Activated CD8-positive, alpha-beta T cell treated with anti-CD3 and anti-CD28 coated beads for 36 hours (primary cell): ENCODE measurements at regions of chr2 and their contacts with region 1.

Region 1: DNA sequence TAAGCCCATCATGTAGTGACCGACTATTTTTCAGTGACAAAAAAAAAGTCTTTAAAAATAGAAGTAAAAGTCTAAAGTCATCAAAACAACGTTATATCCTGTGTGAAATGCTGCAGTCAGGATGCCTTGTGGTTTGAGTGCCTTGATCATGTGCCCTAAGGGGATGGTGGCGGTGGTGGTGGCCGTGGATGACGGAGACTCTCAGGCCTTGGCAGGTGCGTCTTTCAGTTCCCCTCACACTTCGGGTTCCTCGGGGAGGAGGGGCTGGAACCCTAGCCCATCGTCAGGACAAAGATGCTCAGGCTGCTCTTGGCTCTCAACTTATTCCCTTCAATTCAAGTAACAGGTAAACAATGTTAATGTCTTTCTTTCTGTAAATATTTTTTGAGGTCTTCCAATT is at the start of gene CD28:
- DNase-seq: peak; percentile 97
- ATAC-seq: peak; percentile 75
- H3K4me3 Mint-ChIP-seq: peak within 1 kb of the TSS; percentile 92
- H3K27ac Mint-ChIP-seq: peak within 1 kb of the TSS; percentile 97
- H3K4me1 Mint-ChIP-seq: peaks cover 42% of the 10 kb centered on the region
- H3K27me3 Mint-ChIP-seq: no peaks in the 10 kb centered on the region
- CTCF ChIP-seq: no peak
- total RNA-seq, gene CD28: 94.2 to 97.3 TPM

Region 2: GRCh38 chr2:203400816-203401585 is 305.4 kb before region 1 on chr2:
- CTCF ChIA-PET with region 1: no interaction called
- POLR2A ChIA-PET with region 1: no interaction called
- intact Hi-C with region 1: no loop called
- DNase-seq: no peak
- ATAC-seq: no peak
- H3K4me3 Mint-ChIP-seq: no peak overlapping the region
- H3K27ac Mint-ChIP-seq: no peak overlapping the region
- H3K4me1 Mint-ChIP-seq: no peaks in the 10 kb centered on the region
- H3K27me3 Mint-ChIP-seq: no peaks in the 10 kb centered on the region
- CTCF ChIP-seq: no peak

Region 3: DNA sequence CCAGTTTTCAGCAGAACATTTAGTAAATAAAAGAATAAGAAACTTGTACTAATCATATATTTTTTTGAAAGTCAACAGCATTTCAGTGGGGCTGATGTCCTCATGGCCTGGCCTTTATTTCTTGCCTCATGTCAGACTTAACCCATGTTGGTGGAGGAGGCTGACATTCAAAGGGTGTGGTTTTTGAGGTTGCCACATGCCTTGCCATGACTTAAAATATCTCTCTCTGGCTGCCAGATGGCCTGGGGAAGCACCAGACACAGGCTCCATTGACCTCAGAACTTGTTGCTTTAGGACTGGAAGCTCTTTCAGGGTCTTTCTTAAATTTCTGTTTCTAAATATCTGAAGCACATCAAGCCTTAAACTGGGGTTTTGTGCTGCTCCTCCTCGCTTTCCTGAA is 32.5 kb before region 1 on chr2:
- CTCF ChIA-PET with region 1: no interaction called
- POLR2A ChIA-PET with region 1: interaction called, 3 read pairs
- intact Hi-C with region 1: loop called (anchors 5 kb)
- DNase-seq: peak; percentile 93
- ATAC-seq: peak; percentile 91
- H3K4me3 Mint-ChIP-seq: peak overlapping the region; percentile 20
- H3K27ac Mint-ChIP-seq: peak overlapping the region; percentile 84
- H3K4me1 Mint-ChIP-seq: peaks cover 36% of the 10 kb centered on the region
- H3K27me3 Mint-ChIP-seq: no peaks in the 10 kb centered on the region
- CTCF ChIP-seq: no peak

Region 4: DNA sequence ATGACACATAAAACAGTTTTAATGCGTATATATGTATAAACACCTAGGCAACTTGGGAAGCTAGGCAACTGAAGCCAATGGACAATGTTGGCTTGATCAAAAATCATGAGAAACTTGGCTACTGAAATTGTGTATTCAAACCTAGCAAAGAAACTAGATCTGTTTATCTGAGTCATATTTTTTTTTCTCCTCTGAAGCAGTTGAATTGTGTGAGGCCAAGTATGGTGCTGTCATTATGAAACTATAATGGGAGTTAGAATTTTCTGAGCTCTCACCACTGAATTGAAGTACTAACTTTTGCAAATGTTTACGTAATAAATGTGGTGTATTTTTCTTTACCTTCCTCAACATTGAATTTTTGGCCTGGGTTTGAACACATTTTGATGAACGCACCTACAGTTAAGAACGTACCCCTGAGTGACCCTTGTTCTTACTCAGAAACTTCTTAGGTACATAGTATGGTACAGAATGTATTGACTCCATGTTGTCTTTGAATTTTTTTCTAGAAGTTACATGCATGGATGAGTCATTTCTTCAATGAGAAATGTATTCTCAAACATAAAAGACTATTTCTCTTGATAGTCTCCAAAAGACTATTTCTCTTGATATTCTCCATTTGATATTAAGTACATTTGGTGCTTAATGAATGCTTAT is 23.8 kb after region 1 on chr2:
- CTCF ChIA-PET with region 1: interaction called, 5 read pairs
- POLR2A ChIA-PET with region 1: interaction called, 101 read pairs
- intact Hi-C with region 1: no loop called
- DNase-seq: no peak
- ATAC-seq: peak; percentile 63
- H3K4me3 Mint-ChIP-seq: peak overlapping the region; percentile 49
- H3K27ac Mint-ChIP-seq: peak overlapping the region; percentile 99
- H3K4me1 Mint-ChIP-seq: peaks cover 89% of the 10 kb centered on the region
- H3K27me3 Mint-ChIP-seq: no peaks in the 10 kb centered on the region
- CTCF ChIP-seq: no peak

Region 5: DNA sequence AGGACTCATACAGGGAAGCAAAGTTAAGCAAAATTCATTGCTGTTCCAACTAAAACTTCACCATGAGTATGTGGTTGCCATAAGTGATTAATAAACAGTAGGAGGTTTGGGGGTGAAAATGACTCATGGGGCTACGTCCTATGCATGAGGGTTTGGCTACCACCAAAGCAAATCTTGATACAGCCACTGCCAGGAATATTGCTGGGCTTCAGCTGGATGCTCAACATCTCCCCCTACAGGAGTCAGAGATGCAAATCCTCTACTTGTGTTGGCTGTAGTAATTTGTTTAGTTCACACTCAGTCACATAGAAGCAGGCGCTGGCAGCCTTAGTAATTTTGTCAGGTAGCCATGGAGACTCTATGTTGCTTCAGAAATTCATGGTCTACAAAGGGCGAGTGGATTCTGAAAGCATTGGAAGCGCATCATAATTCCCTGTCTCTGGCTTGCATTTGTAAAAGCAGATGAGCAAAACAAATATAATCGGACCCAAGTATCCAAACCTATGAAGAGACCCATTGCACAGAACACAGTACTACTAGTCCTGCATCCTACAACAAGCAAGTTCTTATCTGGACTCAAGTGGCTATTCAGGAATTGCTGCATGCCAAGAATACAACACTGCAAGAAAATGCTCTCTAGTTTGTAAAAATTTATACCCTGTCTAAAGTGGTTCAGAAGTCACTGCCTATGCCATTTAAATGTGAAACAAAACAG is 76.0 kb after region 1 on chr2:
- CTCF ChIA-PET with region 1: interaction called, 3 read pairs
- POLR2A ChIA-PET with region 1: interaction called, 5 read pairs
- intact Hi-C with region 1: loop called (anchors 5 kb)
- DNase-seq: peak; percentile 83
- ATAC-seq: peak; percentile 96
- H3K4me3 Mint-ChIP-seq: no peak overlapping the region
- H3K27ac Mint-ChIP-seq: peak overlapping the region; percentile 82
- H3K4me1 Mint-ChIP-seq: peaks cover 49% of the 10 kb centered on the region
- H3K27me3 Mint-ChIP-seq: no peaks in the 10 kb centered on the region
- CTCF ChIP-seq: peak; percentile 77

Region 6: GRCh38 chr2:203871371-203871983 is 165.1 kb after region 1 on chr2:
- CTCF ChIA-PET with region 1: no interaction called
- POLR2A ChIA-PET with region 1: interaction called, 21 read pairs
- intact Hi-C with region 1: no loop called
- DNase-seq: peak; percentile 72
- ATAC-seq: peak; percentile 69
- H3K4me3 Mint-ChIP-seq: peak overlapping the region; percentile 81
- H3K27ac Mint-ChIP-seq: peak overlapping the region; percentile 97
- H3K4me1 Mint-ChIP-seq: peaks cover 78% of the 10 kb centered on the region
- H3K27me3 Mint-ChIP-seq: no peaks in the 10 kb centered on the region
- CTCF ChIP-seq: no peak